Right lobe of liver (tissue), 6 donors: ENCODE measurements at regions of chr19 and their contacts with region 1.

Region 1: DNA sequence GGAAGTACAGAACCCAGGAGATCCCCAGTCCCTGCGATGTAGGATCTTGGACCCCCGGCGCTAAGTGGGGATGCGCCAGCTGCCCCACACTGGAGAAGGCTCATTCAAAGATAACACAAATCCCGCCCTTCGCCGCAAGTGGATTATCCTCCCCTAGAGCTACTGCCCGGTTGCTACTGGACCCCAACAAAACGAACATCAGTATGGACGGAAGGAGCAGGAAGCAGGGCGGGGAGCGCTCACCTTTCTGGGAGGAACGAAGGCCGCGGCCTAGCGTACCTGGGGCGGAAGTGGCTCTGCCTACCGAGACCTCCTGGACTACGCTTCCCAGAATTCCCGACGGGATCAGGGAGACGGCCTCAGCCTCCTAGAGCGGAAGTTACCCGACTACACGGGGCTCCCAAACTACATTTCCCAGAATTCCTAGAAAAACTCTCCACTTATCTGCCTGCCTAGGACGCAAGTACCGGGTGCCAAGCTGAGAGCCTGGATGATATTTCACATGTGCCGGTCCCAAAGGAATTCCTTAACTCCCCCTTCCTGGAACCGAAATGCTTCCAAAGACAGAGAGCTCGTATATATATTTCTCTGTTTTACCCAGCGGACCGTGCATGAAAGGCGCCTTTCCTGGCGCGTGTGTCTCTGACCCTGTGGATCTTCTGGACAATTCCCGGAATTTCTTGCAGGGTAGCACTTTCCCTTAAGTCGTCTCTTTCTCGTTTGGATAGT is at the start of gene ZNF112:
- DNase-seq: peak; percentile 88 to 96 (median 94)
- ATAC-seq: peak; percentile 100
- H3K4me3 ChIP-seq: peak within 1 kb of the TSS; percentile 36 to 66 (median 65)
- H3K27ac ChIP-seq: no peak within 1 kb of the TSS
- H3K4me1 ChIP-seq: peaks cover 0 to 6% (median 0%) of the 10 kb centered on the region in 4 donors
- H3K27me3 ChIP-seq: no peaks in the 10 kb centered on the region
- CTCF ChIP-seq: no peak
- POLR2A ChIP-seq: peak; percentile 46
- total RNA-seq, gene ZNF112: 0.86 to 1.7 (median 1.1) TPM

Region 2: DNA sequence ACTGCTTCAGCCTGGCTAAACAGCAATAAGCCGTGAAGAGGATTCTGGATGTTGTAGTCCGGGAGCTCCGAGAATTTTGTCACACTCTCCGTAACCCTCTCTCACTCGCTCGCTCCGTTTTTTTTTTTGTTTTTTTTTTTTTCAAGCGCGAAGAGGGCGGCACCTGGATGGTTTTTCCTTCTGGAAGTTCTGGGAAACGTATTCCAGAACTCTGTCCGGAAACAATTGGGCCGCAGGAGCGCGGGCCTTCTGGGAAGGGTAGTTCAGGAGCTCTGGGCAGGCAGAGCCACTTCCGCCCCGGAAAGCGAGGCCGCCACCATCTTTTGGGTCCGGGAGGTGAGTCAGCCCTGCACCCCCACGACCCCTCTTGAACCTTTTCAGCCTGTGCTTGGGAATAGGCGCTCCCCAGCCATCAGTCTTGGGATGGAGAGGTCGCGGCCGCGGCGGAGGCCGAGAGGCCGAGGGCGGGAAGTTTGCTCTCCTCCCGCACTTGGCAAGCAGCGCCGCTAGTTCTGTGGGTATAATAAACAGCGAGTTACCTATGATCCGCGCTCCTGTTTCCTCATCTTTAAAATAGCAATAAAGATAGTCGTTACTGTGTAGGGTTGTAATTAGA is 144.2 kb before region 1 on chr19 and contains the start of gene ZNF227:
- intact Hi-C with region 1: loop called in 1 of 2 experiments (anchors 5 kb)
- DNase-seq: peak; percentile 91 to 95 (median 93)
- ATAC-seq: peak; percentile 97 to 99 (median 98)
- H3K4me3 ChIP-seq: peak within 1 kb of the TSS; percentile 74 to 85 (median 81)
- H3K27ac ChIP-seq: peak within 1 kb of the TSS; percentile 48 to 79 (median 65)
- H3K4me1 ChIP-seq: peaks cover 0 to 7% (median 0%) of the 10 kb centered on the region in 4 donors
- H3K27me3 ChIP-seq: no peaks in the 10 kb centered on the region
- CTCF ChIP-seq: no peak
- POLR2A ChIP-seq: no peak
- total RNA-seq, gene ZNF227: 4.5 to 8.5 (median 6.8) TPM

Region 3: DNA sequence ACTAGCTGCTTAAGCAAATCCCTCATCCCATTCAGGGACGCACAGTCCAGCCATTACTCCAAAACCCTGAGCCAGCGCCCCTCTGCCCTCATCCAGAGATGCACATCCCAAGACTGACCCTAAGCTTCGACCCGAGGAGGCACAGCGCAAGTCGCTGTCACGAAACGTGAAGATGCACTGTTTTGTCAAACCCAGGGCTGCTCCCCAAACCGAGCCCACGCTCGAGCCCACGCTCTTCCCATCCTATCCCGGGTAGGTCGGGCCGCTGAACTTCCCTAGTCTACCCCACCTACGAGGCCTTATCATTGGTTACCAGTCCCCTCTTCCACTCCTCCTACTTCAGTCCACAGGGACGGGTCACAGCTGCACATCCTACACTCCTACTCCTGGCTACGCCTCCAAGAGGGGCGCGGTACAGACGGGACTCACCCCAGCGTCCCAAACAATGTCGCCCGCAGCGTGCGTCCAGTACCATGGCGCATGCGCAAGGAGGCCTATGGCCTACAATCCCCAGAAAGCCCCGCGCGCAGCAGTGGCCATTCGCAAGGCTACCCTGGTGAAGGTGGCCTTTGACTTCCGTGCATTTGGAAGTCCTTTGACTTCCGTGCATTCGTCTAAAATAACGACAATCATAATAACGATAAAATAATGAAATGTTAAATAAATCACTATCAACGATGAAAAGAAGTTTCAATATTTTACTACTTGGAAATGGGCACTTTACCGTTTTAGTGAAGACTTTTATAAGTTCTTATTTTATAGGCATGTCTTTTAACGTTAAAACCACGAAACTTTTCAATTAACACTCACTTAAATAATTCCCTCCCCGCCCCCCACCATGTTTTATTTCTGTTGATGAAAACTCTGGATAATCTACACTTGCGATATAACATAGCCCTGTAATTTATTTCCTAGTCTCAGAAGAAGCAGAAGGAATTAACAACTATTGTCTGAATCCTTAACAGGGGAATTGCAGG is 44.9 kb after region 1 on chr19 and contains the start of gene ZNF285:
- intact Hi-C with region 1: no loop called
- DNase-seq: peak; percentile 88 to 93 (median 89)
- ATAC-seq: peak; percentile 97 to 100 (median 100)
- H3K4me3 ChIP-seq: peak within 1 kb of the TSS; percentile 40 to 63 (median 42)
- H3K27ac ChIP-seq: no peak within 1 kb of the TSS
- H3K4me1 ChIP-seq: no peaks in the 10 kb centered on the region
- H3K27me3 ChIP-seq: no peaks in the 10 kb centered on the region
- CTCF ChIP-seq: no peak
- POLR2A ChIP-seq: no peak
- total RNA-seq, gene ZNF285: 0.37 to 1.6 (median 0.90) TPM

Region 4: DNA sequence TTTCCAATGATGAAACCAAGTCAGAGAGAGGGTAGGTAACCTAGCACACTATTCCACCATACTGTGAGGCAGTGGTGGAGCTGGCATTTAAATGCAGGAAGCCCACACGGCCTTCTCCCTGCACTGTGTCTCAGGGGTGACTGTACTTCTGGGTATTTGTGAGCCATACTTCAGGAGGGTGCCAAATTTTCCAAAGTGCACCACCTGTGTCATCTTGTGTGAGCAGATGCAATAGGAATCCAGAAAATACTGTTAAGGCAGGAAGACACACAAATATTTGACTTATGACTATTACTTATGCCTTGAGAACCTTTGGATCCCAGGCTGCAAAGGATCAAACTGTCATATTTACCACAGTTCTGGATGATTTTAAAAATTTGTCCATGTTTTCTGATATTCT is 74.4 kb after region 1 on chr19:
- intact Hi-C with region 1: no loop called
- DNase-seq: no peak
- ATAC-seq: no peak
- H3K4me3 ChIP-seq: no peak overlapping the region
- H3K27ac ChIP-seq: no peak overlapping the region
- H3K4me1 ChIP-seq: no peaks in the 10 kb centered on the region
- H3K27me3 ChIP-seq: no peaks in the 10 kb centered on the region
- CTCF ChIP-seq: no peak
- POLR2A ChIP-seq: no peak